ENCODE measurements at regions of chr9 and their contacts with region 1.

Region 1: GRCh38 chr9:119365291-119366027 is 3.8 kb downstream of the BRINP1 start:
- DNase-seq: no peak
- ATAC-seq: no peak
- H3K4me3 ChIP-seq: no peak overlapping the region
- H3K27ac ChIP-seq: no peak overlapping the region
- H3K4me1 ChIP-seq: no peaks in the 10 kb centered on the region
- H3K27me3 ChIP-seq: no peaks in the 10 kb centered on the region
- CTCF ChIP-seq: 0 out of 2 replicates have a peak, but pooled peaks have one; percentile 12
- POLR2A ChIP-seq: no peak
- RAD21 ChIP-seq: 0 out of 2 replicates have a peak, but pooled peaks have one; percentile 20

Region 2: DNA sequence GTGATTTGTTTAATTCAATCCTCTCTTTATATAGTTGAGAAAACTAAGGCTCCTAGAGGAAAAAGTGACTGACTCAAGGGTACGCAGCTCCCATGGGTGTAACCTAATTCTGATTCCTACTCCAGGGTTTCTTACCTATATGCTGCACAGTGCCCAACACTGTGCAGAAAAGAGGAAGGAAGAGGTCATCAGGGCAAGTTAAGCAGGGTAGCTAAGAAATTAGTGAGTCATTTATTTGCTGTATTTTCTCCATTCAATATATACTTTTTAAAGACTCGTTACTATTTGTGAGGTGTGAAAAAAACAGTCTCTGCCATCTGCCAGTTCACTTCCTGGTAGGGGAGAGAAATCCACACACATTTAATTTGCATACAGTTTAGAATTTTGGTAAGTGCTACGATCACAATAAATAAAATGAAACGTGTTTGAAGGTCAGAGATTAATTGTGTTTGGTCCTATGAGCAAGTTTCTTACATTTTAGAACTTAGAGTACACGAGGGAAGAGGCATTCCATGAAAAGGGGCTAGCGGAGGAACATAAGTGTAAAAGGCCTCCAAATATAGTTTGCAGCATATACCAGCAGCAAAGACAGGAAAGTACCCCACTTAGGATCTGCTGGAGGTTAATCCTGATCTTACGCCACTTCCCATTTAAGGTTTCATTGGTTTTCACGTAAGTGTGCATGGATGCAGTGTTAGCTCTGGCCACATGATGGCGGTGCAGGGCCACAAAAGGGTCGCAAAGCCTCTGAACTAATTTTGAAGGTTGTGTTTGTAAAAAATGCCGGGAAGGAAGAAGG is 1721.1 kb before region 1 on chr9:
- CTCF ChIA-PET with region 1: no interaction called
- POLR2A ChIA-PET with region 1: no interaction called
- dilution Hi-C with region 1: no loop called
- in situ Hi-C with region 1: no loop called
- intact Hi-C with region 1: loop called (anchors 10 kb)
- DNase-seq: peak; percentile 49
- ATAC-seq: peak; percentile 94
- H3K4me3 ChIP-seq: no peak overlapping the region
- H3K27ac ChIP-seq: no peak overlapping the region
- H3K4me1 ChIP-seq: no peaks in the 10 kb centered on the region
- H3K27me3 ChIP-seq: no peaks in the 10 kb centered on the region
- CTCF ChIP-seq: peak; percentile 89
- POLR2A ChIP-seq: no peak
- RAD21 ChIP-seq: peak; percentile 90

Region 3: DNA sequence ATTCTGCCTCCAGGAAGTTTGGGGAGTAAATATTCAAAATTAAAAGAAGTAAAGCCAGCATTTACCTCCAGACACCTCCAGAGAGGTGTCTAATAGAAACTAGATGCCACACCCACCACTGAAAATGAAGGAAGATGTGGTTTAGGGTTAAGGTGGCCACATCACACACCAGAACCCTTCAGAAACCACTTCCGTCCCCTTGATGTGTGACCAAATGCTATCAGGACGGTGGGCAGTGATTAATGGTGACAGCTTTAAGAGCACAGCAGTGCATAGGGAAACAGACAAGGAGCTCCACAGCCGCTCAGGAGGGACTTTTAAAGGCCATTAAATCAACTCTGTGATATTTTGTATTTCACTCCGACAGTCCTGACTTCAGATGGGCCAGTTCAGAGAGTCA is 291.4 kb before region 1 on chr9:
- CTCF ChIA-PET with region 1: no interaction called
- POLR2A ChIA-PET with region 1: no interaction called
- dilution Hi-C with region 1: no loop called
- in situ Hi-C with region 1: no loop called
- intact Hi-C with region 1: no loop called
- DNase-seq: no peak
- ATAC-seq: no peak
- H3K4me3 ChIP-seq: no peak overlapping the region
- H3K27ac ChIP-seq: no peak overlapping the region
- H3K4me1 ChIP-seq: no peaks in the 10 kb centered on the region
- H3K27me3 ChIP-seq: no peaks in the 10 kb centered on the region
- CTCF ChIP-seq: no peak
- POLR2A ChIP-seq: no peak
- RAD21 ChIP-seq: no peak

Region 4: GRCh38 chr9:119409403-119409951 is 44.0 kb after region 1 on chr9:
- CTCF ChIA-PET with region 1: no interaction called
- POLR2A ChIA-PET with region 1: no interaction called
- dilution Hi-C with region 1: no loop called
- in situ Hi-C with region 1: no loop called
- intact Hi-C with region 1: no loop called
- DNase-seq: no peak
- ATAC-seq: no peak
- H3K4me3 ChIP-seq: no peak overlapping the region
- H3K27ac ChIP-seq: no peak overlapping the region
- H3K4me1 ChIP-seq: no peaks in the 10 kb centered on the region
- H3K27me3 ChIP-seq: no peaks in the 10 kb centered on the region
- CTCF ChIP-seq: no peak
- POLR2A ChIP-seq: no peak
- RAD21 ChIP-seq: no peak

Measured in IMR-90 (cell line).